Activated CD4-positive, alpha-beta memory T cell treated with anti-CD3 and anti-CD28 coated beads for 36 hours (primary cell): ENCODE measurements at regions of chr14 and their contacts with region 1.

Region 1: GRCh38 chr14:23631702-23632460 is 4.3 kb upstream of the DHRS2 start:
- DNase-seq: peak; percentile 79
- H3K4me3 Mint-ChIP-seq: peak overlapping the region; percentile 24
- H3K27ac Mint-ChIP-seq: no peak overlapping the region
- H3K4me1 Mint-ChIP-seq: peaks cover 3% of the 10 kb centered on the region
- H3K27me3 Mint-ChIP-seq: peaks cover 2% of the 10 kb centered on the region

Region 2: DNA sequence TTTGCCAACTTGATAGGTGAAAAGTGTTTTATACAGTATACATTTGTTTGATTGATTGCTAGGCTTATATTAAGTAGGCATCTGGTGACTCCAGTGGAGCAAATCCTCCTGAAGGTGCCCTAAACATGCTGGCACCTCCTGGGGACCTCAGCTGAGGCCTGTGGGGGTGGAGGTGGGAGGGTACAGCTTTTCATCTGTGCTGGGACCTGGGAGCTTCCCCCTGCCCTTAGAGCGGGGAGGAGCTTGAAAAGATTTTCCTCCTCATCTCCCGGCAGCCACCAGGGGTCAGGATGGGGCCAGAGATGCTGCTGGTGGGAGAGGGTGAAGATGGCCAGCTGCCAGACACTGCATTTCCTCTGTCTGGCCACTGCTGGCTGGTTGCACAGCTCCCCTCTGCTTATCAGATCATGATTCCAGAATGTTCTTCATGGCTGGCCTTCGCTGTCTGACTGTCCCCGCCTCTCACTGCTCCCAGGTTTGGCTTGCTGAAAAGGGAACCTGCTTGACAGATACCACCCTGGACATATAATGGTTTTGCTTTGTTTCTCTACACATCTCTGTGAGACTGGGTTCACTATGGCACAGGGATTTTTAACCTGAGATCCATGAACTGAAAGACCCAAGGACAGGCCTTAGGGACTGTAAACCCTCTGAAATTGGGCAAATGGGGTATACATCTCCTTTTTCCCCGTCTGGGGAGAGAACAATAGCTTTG is 42.8 kb before region 1 on chr14:
- CTCF ChIA-PET with region 1: interaction called, 103 read pairs
- POLR2A ChIA-PET with region 1: no interaction called
- intact Hi-C with region 1: loop called (anchors 1 kb)
- DNase-seq: peak; percentile 91
- H3K4me3 Mint-ChIP-seq: no peak overlapping the region
- H3K27ac Mint-ChIP-seq: no peak overlapping the region
- H3K4me1 Mint-ChIP-seq: peaks cover 2% of the 10 kb centered on the region
- H3K27me3 Mint-ChIP-seq: peaks cover 15% of the 10 kb centered on the region

Region 3: DNA sequence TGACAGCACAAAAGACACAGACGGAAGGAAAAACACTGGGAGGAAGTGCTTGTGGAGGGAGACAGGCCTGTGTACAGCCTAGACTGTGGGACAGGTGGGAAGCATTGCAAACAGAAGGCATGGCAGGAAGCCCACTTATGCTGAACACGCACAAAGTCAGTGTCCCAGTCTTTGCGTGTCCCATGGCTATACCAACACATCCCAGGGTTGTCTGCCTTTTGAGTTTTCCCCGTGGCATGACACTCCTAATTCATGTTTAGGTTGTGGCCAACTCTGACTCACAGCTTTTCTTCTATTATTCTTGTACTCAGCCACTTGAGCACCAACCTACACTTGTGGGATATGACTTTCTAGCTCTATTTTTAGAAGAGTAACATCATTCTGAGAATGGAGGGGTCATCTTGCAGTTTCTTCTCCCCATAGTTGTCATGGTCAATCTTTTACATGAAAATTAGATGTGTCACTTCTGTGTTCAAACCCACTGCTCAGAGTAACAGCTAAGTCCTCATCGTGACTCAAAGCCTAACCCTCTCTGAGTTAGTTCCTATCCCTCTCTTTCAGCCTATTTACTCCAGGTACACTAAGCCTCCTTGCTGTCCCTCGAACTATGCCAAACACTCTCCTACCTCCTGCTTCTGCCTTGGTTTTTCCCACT is 25.8 kb before region 1 on chr14:
- CTCF ChIA-PET with region 1: interaction called, 72 read pairs
- POLR2A ChIA-PET with region 1: no interaction called
- intact Hi-C with region 1: loop called (anchors 2 kb)
- DNase-seq: peak; percentile 53
- H3K4me3 Mint-ChIP-seq: no peak overlapping the region
- H3K27ac Mint-ChIP-seq: peak overlapping the region; percentile 87
- H3K4me1 Mint-ChIP-seq: peaks cover 44% of the 10 kb centered on the region
- H3K27me3 Mint-ChIP-seq: no peaks in the 10 kb centered on the region

Region 4: GRCh38 chr14:23646648-23647549 is 15.0 kb after region 1 on chr14:
- CTCF ChIA-PET with region 1: interaction called, 21 read pairs
- POLR2A ChIA-PET with region 1: no interaction called
- intact Hi-C with region 1: no loop called
- DNase-seq: peak; percentile 12
- H3K4me3 Mint-ChIP-seq: no peak overlapping the region
- H3K27ac Mint-ChIP-seq: no peak overlapping the region
- H3K4me1 Mint-ChIP-seq: no peaks in the 10 kb centered on the region
- H3K27me3 Mint-ChIP-seq: no peaks in the 10 kb centered on the region

Region 5: DNA sequence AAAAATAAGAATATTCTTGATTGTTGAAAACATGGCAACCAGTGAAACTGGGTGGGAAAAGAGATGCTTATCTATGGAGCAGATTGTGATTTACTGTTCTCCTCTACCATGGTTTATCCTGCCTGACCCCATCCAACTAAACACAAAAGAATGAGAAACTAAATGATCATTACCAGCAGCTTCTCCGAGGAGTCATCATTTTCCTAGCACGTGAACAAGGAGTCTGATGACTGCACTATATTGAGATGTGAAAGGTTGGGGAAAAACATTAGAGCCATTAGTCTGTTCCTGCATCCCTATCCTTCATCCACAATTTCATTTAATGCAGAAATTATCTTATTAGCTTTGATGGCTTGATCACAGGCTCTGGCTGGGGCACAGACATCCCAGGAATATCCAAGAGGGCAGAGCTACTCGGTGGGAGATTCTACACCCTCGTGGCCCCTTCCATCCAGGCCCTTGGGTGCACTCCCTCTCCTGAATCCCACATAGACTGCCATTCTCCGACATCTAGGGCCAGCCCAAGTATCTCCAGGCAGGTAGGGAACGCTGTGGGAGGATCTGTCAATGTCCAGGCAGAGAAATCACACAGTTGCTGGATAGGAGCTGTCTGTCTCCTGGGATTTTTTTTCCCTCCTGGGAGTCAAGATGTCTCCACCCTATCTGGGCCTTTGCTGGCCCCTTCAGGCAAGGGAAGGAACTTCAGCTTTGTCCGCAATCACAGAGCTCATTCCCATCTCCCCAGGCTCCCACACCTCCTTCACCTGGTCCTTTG is 278.4 kb after region 1 on chr14:
- CTCF ChIA-PET with region 1: interaction called, 58 read pairs
- POLR2A ChIA-PET with region 1: no interaction called
- intact Hi-C with region 1: no loop called
- DNase-seq: peak; percentile 42
- H3K4me3 Mint-ChIP-seq: no peak overlapping the region
- H3K27ac Mint-ChIP-seq: no peak overlapping the region
- H3K4me1 Mint-ChIP-seq: no peaks in the 10 kb centered on the region
- H3K27me3 Mint-ChIP-seq: peaks cover 14% of the 10 kb centered on the region

Region 6: DNA sequence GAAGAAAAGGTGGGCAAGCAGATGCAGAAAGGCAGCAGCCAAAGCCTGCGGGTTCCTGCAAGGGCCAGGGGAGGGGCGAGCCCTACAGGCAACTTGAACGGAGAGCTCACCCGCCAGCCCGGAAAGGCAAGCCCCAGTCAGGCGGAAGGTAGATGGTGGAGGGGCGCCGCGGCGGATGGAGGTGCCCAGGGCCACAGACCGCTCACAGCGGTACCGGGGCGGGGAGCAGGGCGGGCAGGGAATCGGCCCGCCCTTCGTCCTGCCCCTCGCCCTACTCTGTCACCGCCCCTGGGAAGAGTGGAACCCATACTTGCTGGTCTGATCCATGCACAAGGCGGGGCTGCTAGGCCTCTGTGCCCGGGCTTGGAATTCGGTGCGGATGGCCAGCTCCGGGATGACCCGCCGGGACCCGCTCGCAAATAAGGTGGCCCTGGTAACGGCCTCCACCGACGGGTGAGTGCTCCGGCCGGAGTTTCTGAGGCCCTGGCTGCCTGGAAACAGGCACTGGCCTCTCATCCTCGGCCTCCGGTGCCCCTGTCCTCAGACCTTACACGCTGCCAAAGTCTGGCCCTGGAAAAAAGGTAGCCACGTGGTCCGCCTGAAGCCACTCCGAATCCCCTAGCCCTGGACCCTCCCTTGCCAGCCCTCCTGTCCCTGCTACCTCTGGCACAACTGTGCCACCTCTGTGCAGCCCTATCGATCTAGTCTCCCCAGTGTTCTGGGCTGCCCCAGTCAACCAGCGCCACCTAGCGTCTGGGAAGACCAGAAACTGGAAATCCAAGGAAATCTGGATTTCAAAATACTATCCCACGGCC is 321.8 kb after region 1 on chr14 and contains the start of gene DHRS4:
- CTCF ChIA-PET with region 1: interaction called, 23 read pairs
- POLR2A ChIA-PET with region 1: no interaction called
- intact Hi-C with region 1: loop called (anchors 1 kb)
- DNase-seq: peak; percentile 87
- H3K4me3 Mint-ChIP-seq: peak within 1 kb of the TSS; percentile 100
- H3K27ac Mint-ChIP-seq: peak within 1 kb of the TSS; percentile 88
- H3K4me1 Mint-ChIP-seq: peaks cover 28% of the 10 kb centered on the region
- H3K27me3 Mint-ChIP-seq: no peaks in the 10 kb centered on the region
- total RNA-seq, gene DHRS4: 25.7 to 27.0 TPM